ENCODE measurements at regions of chr19 and their contacts with region 1.

Region 1: GRCh38 chr19:44903602-44904425 is 1.8 kb upstream of the APOE start:
- DNase-seq: peak; percentile 86
- H3K4me3 ChIP-seq: no peak overlapping the region
- H3K27ac ChIP-seq: peak overlapping the region in 1 of 2 donors; percentile 41
- H3K4me1 ChIP-seq: peaks cover 22% of the 10 kb centered on the region
- H3K27me3 ChIP-seq: no peaks in the 10 kb centered on the region
- CTCF ChIP-seq: peak; percentile 98 to 99 (median 99)
- POLR2A ChIP-seq: no peak

Region 2: DNA sequence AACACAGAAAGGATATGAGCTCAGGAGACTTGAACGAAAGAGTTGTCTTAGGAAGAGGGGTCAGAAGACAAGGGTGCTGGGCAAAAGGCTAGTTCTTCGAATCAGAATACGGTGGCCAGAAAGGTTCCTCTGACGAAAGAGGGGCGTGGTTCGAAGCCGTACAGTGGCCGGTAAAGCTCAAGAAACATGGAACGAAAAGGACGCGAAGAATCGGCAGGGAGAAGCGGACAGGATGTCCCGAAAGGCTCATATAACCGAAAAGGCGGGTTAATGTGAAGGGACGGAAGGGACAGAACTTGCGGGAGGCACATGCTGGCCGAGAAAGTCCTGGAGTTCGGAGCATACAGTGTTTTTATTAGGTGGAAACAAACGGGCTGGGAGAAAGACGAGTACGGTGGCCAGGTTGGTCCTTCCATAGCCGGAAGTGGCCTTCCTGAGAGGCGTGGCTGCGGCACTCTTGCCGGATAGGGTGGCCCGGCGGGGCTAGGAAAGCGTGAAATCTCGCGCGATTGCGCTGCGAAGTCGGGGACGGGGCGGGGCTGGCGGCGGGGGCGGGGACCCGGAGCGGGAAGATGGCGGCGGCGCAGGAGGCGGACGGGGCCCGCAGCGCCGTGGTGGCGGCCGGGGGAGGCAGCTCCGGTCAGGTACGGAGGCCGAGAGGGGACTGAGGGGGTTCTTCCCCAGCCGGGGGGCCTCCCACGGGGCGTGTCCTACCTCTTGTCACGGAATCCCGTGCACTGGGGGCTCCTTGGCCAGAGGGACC is 51.2 kb after region 1 on chr19 and contains the start of gene CLPTM1:
- intact Hi-C with region 1: loop called (anchors 5 kb)
- DNase-seq: peak; percentile 98
- H3K4me3 ChIP-seq: peak within 1 kb of the TSS; percentile 99 to 100
- H3K27ac ChIP-seq: peak within 1 kb of the TSS; percentile 93 to 96
- H3K4me1 ChIP-seq: peaks cover 44% of the 10 kb centered on the region
- H3K27me3 ChIP-seq: no peaks in the 10 kb centered on the region
- CTCF ChIP-seq: peak in 2 of 3 experiments; percentile 50 to 62
- POLR2A ChIP-seq: no peak
- total RNA-seq, gene CLPTM1: 198 to 204 TPM

Measured in testis (tissue), 5 donors.